Activated CD8-positive, alpha-beta T cell treated with anti-CD3 and anti-CD28 coated beads for 36 hours (primary cell): ENCODE measurements at regions of chr1 and their contacts with region 1.

Region 1: GRCh38 chr1:113963281-113963906 is 15.9 kb upstream of the OLFML3 start:
- DNase-seq: no peak
- ATAC-seq: no peak
- H3K4me3 Mint-ChIP-seq: no peak overlapping the region
- H3K27ac Mint-ChIP-seq: peak overlapping the region; percentile 34
- H3K4me1 Mint-ChIP-seq: peaks cover 20% of the 10 kb centered on the region
- H3K27me3 Mint-ChIP-seq: no peaks in the 10 kb centered on the region
- CTCF ChIP-seq: peak; percentile 14

Region 2: DNA sequence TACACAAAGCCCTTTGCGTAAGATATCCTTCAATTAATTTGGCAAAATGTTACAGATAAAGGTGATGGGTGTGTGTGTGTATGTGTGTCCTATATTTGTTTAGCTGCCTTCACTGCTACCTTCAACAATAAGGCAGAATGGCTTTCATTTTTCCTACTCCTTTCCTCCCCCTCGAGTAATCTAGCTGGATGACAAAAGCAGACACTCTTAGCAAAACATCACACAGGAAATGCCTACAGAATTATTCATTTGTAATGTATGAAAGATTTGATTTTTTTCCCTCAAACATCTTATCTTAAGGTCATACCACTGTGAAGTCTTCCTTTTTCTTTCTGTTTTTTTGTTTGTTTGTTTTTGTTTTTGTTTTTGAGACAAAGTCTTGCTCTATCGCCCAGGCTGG is 102.5 kb before region 1 on chr1:
- CTCF ChIA-PET with region 1: no interaction called
- POLR2A ChIA-PET with region 1: no interaction called
- intact Hi-C with region 1: no loop called
- DNase-seq: no peak
- ATAC-seq: no peak
- H3K4me3 Mint-ChIP-seq: no peak overlapping the region
- H3K27ac Mint-ChIP-seq: peak overlapping the region; percentile 74
- H3K4me1 Mint-ChIP-seq: peaks cover 49% of the 10 kb centered on the region
- H3K27me3 Mint-ChIP-seq: no peaks in the 10 kb centered on the region
- CTCF ChIP-seq: no peak

Region 3: GRCh38 chr1:113898241-113898814 is 65.1 kb before region 1 on chr1:
- CTCF ChIA-PET with region 1: no interaction called
- POLR2A ChIA-PET with region 1: no interaction called
- intact Hi-C with region 1: no loop called
- DNase-seq: no peak
- ATAC-seq: peak; percentile 42
- H3K4me3 Mint-ChIP-seq: no peak overlapping the region
- H3K27ac Mint-ChIP-seq: peak overlapping the region; percentile 68
- H3K4me1 Mint-ChIP-seq: peaks cover 48% of the 10 kb centered on the region
- H3K27me3 Mint-ChIP-seq: no peaks in the 10 kb centered on the region
- CTCF ChIP-seq: no peak

Region 4: GRCh38 chr1:113978863-113979702 is 15.7 kb after region 1 on chr1 and contains the start of gene OLFML3:
- CTCF ChIA-PET with region 1: interaction called, 26 read pairs
- POLR2A ChIA-PET with region 1: interaction called, 3 read pairs
- intact Hi-C with region 1: no loop called
- DNase-seq: peak; percentile 82
- ATAC-seq: peak; percentile 22
- H3K4me3 Mint-ChIP-seq: no peak within 1 kb of the TSS
- H3K27ac Mint-ChIP-seq: no peak within 1 kb of the TSS
- H3K4me1 Mint-ChIP-seq: peaks cover 44% of the 10 kb centered on the region
- H3K27me3 Mint-ChIP-seq: no peaks in the 10 kb centered on the region
- CTCF ChIP-seq: peak; percentile 84
- total RNA-seq, gene OLFML3: 0.14 to 0.49 TPM